ENCODE measurements at regions of chr11 and their contacts with region 1.

Region 1: DNA sequence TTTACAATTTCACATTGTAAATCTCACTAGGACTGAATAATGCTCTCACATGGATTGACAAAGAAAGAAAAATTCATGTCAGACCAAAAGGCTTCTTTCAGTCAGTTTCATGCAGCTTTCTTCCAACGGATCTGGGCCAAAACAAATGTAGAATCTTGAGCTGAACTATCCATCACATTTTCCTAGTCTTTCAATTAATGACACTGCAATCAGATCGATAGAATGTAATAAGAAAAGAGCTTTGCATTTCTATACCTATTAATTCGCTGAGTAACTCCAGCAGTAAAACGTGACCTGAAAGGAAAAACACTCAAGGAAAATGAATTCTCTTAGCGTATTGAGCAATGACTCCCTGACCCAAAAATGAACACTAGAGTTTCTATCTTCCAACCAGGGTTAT is 194.7 kb upstream of the BLID start:
- DNase-seq: no peak
- H3K4me3 ChIP-seq: no peak overlapping the region
- H3K27ac ChIP-seq: no peak overlapping the region
- H3K4me1 ChIP-seq: no peaks in the 10 kb centered on the region
- H3K27me3 ChIP-seq: no peaks in the 10 kb centered on the region
- CTCF ChIP-seq: no peak
- EP300 ChIP-seq: no peak
- POLR2A ChIP-seq: no peak

Region 2: DNA sequence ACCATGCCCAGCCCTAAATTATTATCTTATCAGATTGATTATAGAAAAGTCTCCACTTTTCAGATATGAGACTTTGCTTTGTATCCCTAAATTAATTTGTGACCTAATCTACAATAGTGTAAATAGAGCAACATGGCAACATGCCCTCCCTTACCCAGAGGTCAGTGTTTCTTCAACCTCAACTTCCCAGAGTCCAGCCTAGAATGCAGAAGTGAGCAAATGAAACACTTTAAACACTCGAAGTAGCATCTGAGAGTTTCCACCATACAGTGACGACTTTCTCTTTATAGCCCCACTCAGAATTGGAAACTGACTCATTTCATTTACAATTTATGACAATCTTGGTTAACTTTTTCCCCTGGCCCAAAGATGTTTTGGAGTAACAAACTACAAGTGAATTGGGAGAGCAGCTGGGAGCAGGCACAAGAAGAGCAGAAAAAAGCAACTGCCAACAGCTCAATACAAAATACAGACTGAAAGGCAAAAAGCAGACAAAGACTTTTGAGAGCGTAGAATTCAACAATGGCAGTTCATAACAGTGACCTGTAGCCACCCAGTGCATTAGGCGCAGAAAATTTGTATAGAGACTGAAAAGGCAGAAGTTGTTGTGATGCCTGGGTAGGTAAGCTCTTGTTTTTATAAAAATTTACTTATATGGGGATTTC is 184.6 kb before region 1 on chr11:
- in situ Hi-C with region 1: no loop called
- intact Hi-C with region 1: loop called (anchors 5 kb)
- DNase-seq: no peak
- H3K4me3 ChIP-seq: no peak overlapping the region
- H3K27ac ChIP-seq: no peak overlapping the region
- H3K4me1 ChIP-seq: no peaks in the 10 kb centered on the region
- H3K27me3 ChIP-seq: no peaks in the 10 kb centered on the region
- CTCF ChIP-seq: no peak
- EP300 ChIP-seq: no peak
- POLR2A ChIP-seq: no peak

Measured in transverse colon (tissue), 4 donors.